ENCODE measurements at regions of chr9 and their contacts with region 1.

Region 1: GRCh38 chr9:128286440-128286839 is 10.4 kb downstream of the SWI5 start:
- DNase-seq: no peak
- H3K4me3 ChIP-seq: no peak overlapping the region
- H3K27ac ChIP-seq: no peak overlapping the region
- H3K4me1 ChIP-seq: no peaks in the 10 kb centered on the region
- H3K27me3 ChIP-seq: no peaks in the 10 kb centered on the region
- CTCF ChIP-seq: no peak

Region 2: DNA sequence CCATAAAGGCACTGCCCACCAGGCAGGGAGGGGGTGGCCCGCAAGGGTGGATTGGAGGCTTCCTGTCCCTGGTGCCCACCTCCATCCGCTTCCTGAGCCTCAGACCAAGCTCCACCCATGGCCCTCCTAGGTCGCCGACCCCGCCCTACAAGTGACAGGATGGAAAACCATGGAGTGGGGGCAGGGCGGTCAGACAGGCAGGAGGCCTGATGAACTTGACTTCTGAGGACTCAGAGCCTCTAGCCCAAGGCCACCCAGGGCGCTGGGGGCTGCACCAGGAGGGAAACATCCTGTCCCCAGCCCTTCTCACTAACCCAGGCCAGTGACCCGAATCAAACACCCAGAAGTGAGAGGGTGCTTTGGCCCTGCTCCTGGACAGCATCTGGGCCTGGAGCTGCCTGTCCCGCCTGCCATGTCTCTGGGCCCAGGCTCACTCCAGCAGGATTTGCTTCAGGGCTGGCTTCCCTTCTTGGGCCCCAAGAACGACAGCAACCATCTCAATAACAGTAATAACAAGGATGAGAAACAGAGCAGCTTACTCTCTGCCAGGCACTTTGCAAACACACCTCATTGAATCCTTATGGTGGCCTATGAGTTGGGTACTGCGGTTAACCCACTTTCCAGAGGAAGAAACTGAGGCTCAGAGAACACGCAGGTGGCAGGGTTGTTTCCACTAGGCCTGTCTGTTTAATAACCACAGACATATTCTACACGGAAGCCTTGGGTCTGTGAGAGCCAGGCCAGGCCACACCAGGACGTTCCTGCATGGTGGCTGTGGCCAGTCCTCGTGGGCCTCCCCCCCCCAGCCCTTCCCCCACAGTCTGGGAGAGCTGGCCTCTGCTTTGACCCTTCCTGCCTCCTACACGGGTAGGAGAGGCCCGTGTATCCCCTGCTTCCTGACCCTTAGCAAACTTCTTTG is 382.6 kb before region 1 on chr9:
- CTCF ChIA-PET with region 1: interaction called, 18 read pairs
- POLR2A ChIA-PET with region 1: no interaction called
- intact Hi-C with region 1: no loop called
- DNase-seq: no peak
- H3K4me3 ChIP-seq: no peak overlapping the region
- H3K27ac ChIP-seq: no peak overlapping the region
- H3K4me1 ChIP-seq: peaks cover 20% of the 10 kb centered on the region; the same call in 1 of the 2 replicates
- H3K27me3 ChIP-seq: no peaks in the 10 kb centered on the region
- CTCF ChIP-seq: no peak

Region 3: DNA sequence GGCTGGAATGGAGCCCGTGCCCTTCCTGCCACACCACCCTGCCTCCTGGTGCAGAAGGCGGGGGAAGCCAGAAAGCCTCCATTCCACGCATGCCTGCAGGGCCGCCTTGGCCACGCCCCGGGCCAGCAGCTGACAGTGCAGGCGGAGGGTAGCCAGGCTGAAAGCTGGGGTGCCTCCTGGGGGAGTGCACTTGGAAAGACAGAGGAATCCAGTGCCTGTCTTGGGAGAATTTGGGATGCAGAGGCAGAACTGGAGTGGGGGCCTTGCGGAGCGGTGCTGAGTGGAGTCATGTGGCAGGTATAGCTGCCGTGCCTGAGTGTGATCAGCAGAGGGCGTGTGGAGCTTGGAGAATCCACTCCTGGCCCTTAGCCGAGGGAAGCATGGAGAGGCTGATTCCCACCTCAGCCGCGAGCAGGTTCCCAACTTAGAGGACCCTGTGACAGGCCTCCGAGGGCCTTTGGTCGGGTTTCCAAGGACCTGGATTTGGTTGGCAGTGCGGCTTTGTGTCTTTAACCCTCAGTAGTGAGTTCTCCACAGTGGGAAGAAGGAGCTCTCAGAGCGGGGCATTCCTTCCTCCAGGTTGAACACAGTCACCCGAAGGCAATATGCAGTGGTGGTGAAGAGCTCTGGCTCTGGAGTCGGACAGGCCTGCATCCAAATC is 75.7 kb after region 1 on chr9:
- CTCF ChIA-PET with region 1: interaction called, 20 read pairs
- POLR2A ChIA-PET with region 1: interaction called, 3 read pairs
- intact Hi-C with region 1: no loop called
- DNase-seq: peak in 1 of 2 experiments; percentile 87
- H3K4me3 ChIP-seq: peak overlapping the region; percentile 53; the same call in 1 of the 2 replicates
- H3K27ac ChIP-seq: no peak overlapping the region
- H3K4me1 ChIP-seq: peaks cover 12% of the 10 kb centered on the region
- H3K27me3 ChIP-seq: no peaks in the 10 kb centered on the region
- CTCF ChIP-seq: peak; percentile 88